CD14-positive monocyte (primary cell): ENCODE measurements at regions of chr5 and their contacts with region 1.

Region 1: DNA sequence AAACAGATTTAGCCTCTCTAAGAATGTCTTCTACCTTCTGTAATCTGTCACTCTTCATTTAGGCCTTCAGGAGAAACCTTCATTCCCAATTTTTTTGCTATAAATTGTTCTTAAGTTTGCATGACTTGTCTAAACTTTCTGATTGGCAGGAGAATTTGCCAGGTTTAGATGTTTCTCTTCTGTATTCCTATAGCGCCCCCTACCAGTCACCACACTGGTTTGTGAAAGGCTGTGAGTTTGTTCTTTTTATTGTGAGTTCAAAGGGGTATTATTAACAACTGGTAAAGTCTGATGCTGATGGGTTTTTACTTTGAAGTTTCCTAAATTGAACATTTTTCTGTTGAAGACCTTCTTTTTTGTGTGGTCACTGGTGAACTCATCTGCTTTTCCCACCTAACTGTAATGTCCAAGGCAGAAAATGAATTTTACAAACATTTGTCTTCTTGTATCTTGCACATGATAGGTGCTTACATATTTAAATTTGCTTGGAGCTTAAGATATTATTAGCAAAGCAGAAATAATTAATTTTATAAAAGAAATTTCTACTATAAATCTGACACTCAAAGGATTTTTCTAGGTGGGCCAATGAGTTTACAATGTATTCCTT is 18.4 kb upstream of the F2RL2 start:
- DNase-seq: peak; percentile 37 to 55 (median 42)
- H3K4me3 ChIP-seq: no peak overlapping the region
- H3K4me3 Mint-ChIP-seq: no peak overlapping the region
- H3K27ac ChIP-seq: no peak overlapping the region
- H3K27ac Mint-ChIP-seq: no peak overlapping the region
- H3K4me1 ChIP-seq: peaks cover 16 to 22% of the 10 kb centered on the region in 2 donors
- H3K4me1 Mint-ChIP-seq: peaks cover 13% of the 10 kb centered on the region
- H3K27me3 ChIP-seq: no peaks in the 10 kb centered on the region
- H3K27me3 Mint-ChIP-seq: no peaks in the 10 kb centered on the region
- CTCF ChIP-seq: peak; percentile 81

Region 2: GRCh38 chr5:76292620-76293322 is 348.8 kb before region 1 on chr5:
- intact Hi-C with region 1: no loop called
- DNase-seq: peak; percentile 78 to 91 (median 91)
- H3K4me3 ChIP-seq: peak overlapping the region in 1 of 3 experiments; percentile 34
- H3K4me3 Mint-ChIP-seq: peak overlapping the region in 1 of 2 donors; percentile 12
- H3K27ac ChIP-seq: peak overlapping the region; percentile 19 to 80
- H3K27ac Mint-ChIP-seq: peak overlapping the region; percentile 84 to 94 (median 91)
- H3K4me1 ChIP-seq: peaks cover 39 to 40% of the 10 kb centered on the region in 2 donors
- H3K4me1 Mint-ChIP-seq: peaks cover 39% of the 10 kb centered on the region
- H3K27me3 ChIP-seq: no peaks in the 10 kb centered on the region
- H3K27me3 Mint-ChIP-seq: no peaks in the 10 kb centered on the region
- CTCF ChIP-seq: no peak

Region 3: DNA sequence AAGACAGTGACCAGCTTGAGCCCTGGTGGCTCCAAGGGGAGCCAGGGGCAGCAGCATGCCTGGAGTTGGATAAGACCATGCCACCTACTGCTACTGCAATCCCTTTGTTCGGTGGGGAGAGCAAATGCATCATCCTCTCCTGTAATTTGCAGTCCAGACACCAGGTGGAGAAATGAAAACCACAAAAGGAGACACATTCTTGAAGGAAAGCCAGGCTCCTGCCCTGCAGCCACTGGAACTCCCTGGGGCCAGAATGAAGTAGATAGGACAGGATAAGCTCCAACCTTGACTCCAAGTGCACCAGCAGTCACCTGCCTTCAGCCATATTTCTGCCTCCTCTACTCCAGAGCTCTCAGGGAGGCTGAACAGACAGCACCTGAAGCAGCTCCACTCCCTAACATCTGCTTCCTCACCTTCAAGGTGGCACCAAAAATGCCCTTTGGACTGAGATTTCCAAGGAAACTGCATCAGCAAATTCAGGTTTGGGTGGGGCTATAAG is 303.6 kb before region 1 on chr5:
- intact Hi-C with region 1: loop called in 1 of 2 experiments (anchors 5 kb)
- DNase-seq: peak; percentile 39 to 56 (median 47)
- H3K4me3 ChIP-seq: no peak overlapping the region
- H3K4me3 Mint-ChIP-seq: no peak overlapping the region
- H3K27ac ChIP-seq: no peak overlapping the region
- H3K27ac Mint-ChIP-seq: no peak overlapping the region
- H3K4me1 ChIP-seq: peaks cover 23 to 27% of the 10 kb centered on the region in 2 donors
- H3K4me1 Mint-ChIP-seq: peaks cover 32% of the 10 kb centered on the region
- H3K27me3 ChIP-seq: no peaks in the 10 kb centered on the region
- H3K27me3 Mint-ChIP-seq: peaks cover 0 to 3% (median 2%) of the 10 kb centered on the region in 3 donors
- CTCF ChIP-seq: peak; percentile 64

Region 4: GRCh38 chr5:76601470-76601869 is 40.1 kb before region 1 on chr5:
- intact Hi-C with region 1: loop called (anchors 2 to 5 kb)
- DNase-seq: peak; percentile 26 to 50 (median 42)
- H3K4me3 ChIP-seq: no peak overlapping the region
- H3K4me3 Mint-ChIP-seq: no peak overlapping the region
- H3K27ac ChIP-seq: no peak overlapping the region
- H3K27ac Mint-ChIP-seq: no peak overlapping the region
- H3K4me1 ChIP-seq: no peaks in the 10 kb centered on the region
- H3K4me1 Mint-ChIP-seq: peaks cover 6% of the 10 kb centered on the region
- H3K27me3 ChIP-seq: no peaks in the 10 kb centered on the region
- H3K27me3 Mint-ChIP-seq: no peaks in the 10 kb centered on the region
- CTCF ChIP-seq: peak; percentile 77